T-cell (primary cell): ENCODE measurements at regions of chr20 and their contacts with region 1.

Region 1: DNA sequence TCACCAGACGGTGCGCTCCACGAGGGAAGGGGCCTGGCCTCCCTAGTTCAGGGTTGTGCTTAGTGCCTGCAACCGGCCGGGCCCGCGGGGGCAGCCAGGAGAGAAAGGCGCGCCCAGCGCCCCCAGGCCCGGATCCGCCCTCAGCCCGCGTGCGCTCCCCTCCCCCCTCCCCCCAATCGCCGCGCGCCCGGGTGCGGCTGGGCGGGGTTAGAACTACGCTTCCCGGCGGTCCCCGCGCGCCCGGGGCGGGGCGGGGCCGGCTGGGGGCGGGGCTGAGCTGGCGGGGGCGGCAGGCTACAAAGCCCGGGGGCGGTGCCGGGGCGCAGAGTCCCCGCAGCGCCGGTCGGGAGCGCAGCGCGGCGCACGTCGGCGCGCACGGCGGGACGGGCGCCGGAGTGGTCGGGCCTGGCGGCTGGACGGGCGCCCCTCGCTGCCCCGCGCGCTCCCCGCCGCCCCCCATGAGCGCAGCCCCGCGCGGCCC is at the start of gene RBM38:
- DNase-seq: peak in 33 of 35 experiments; percentile 42 to 85 (median 58)
- ATAC-seq: peak; percentile 60 to 74 (median 64)
- H3K4me3 ChIP-seq: peak within 1 kb of the TSS; percentile 93 to 96
- H3K4me3 Mint-ChIP-seq: peak within 1 kb of the TSS; percentile 93 to 94 (median 93)
- H3K27ac ChIP-seq: peak within 1 kb of the TSS; percentile 93
- H3K27ac Mint-ChIP-seq: peak within 1 kb of the TSS; percentile 93 to 97
- H3K4me1 ChIP-seq: peaks cover 28 to 66% of the 10 kb centered on the region in 2 experiments
- H3K4me1 Mint-ChIP-seq: peaks cover 42 to 53% (median 50%) of the 10 kb centered on the region in 3 donors
- H3K27me3 ChIP-seq: no peaks in the 10 kb centered on the region
- H3K27me3 Mint-ChIP-seq: no peaks in the 10 kb centered on the region
- total RNA-seq, gene RBM38: 111 to 271 (median 124) TPM

Region 2: DNA sequence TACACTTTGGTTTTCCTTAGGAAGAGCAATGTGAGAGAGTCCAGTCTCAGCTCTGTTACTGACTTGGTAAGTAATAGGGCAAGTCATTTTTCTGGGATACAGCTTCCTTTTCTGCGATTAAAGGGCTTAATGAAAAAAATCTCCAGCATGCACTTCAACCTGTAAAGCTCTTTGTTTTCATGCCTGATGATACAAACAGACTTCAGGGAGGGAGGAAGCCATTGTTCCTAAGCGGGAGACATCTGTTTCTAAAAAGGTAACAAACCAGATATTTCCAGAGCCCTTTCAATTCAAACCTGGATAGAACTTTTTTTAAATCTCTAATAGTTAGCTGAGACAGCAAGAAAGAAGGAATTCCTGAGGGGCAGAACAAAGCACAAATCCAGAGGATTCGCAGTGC is 984.2 kb before region 1 on chr20:
- CTCF ChIA-PET with region 1: no interaction called
- POLR2A ChIA-PET with region 1: no interaction called
- DNase-seq: no peak
- ATAC-seq: no peak
- H3K4me3 ChIP-seq: no peak overlapping the region
- H3K4me3 Mint-ChIP-seq: no peak overlapping the region
- H3K27ac ChIP-seq: no peak overlapping the region
- H3K27ac Mint-ChIP-seq: no peak overlapping the region
- H3K4me1 ChIP-seq: peaks cover 4 to 12% of the 10 kb centered on the region in 2 experiments
- H3K4me1 Mint-ChIP-seq: peaks cover 12 to 25% (median 24%) of the 10 kb centered on the region in 3 donors
- H3K27me3 ChIP-seq: no peaks in the 10 kb centered on the region
- H3K27me3 Mint-ChIP-seq: no peaks in the 10 kb centered on the region

Region 3: GRCh38 chr20:57409672-57410397 is 18.7 kb after region 1 on chr20:
- CTCF ChIA-PET with region 1: no interaction called
- POLR2A ChIA-PET with region 1: interaction called in 1 of 2 experiments, 12 read pairs
- DNase-seq: no peak
- ATAC-seq: no peak
- H3K4me3 ChIP-seq: no peak overlapping the region
- H3K4me3 Mint-ChIP-seq: no peak overlapping the region
- H3K27ac ChIP-seq: no peak overlapping the region
- H3K27ac Mint-ChIP-seq: no peak overlapping the region
- H3K4me1 ChIP-seq: peaks cover 0 to 60% of the 10 kb centered on the region in 2 experiments
- H3K4me1 Mint-ChIP-seq: peaks cover 26 to 39% (median 31%) of the 10 kb centered on the region in 3 donors
- H3K27me3 ChIP-seq: no peaks in the 10 kb centered on the region
- H3K27me3 Mint-ChIP-seq: no peaks in the 10 kb centered on the region

Region 4: GRCh38 chr20:57455386-57455952 is 64.4 kb after region 1 on chr20:
- CTCF ChIA-PET with region 1: no interaction called
- POLR2A ChIA-PET with region 1: interaction called in 1 of 2 experiments, 17 read pairs
- DNase-seq: no peak
- ATAC-seq: no peak
- H3K4me3 ChIP-seq: no peak overlapping the region
- H3K4me3 Mint-ChIP-seq: no peak overlapping the region
- H3K27ac ChIP-seq: no peak overlapping the region
- H3K27ac Mint-ChIP-seq: no peak overlapping the region
- H3K4me1 ChIP-seq: peaks cover 18 to 25% of the 10 kb centered on the region in 2 experiments
- H3K4me1 Mint-ChIP-seq: peaks cover 22 to 32% (median 31%) of the 10 kb centered on the region in 3 donors
- H3K27me3 ChIP-seq: peaks cover 0 to 16% of the 10 kb centered on the region in 2 experiments
- H3K27me3 Mint-ChIP-seq: no peaks in the 10 kb centered on the region